PC-9 (cell line): ENCODE measurements at regions of chr6 and their contacts with region 1.

Region 1: DNA sequence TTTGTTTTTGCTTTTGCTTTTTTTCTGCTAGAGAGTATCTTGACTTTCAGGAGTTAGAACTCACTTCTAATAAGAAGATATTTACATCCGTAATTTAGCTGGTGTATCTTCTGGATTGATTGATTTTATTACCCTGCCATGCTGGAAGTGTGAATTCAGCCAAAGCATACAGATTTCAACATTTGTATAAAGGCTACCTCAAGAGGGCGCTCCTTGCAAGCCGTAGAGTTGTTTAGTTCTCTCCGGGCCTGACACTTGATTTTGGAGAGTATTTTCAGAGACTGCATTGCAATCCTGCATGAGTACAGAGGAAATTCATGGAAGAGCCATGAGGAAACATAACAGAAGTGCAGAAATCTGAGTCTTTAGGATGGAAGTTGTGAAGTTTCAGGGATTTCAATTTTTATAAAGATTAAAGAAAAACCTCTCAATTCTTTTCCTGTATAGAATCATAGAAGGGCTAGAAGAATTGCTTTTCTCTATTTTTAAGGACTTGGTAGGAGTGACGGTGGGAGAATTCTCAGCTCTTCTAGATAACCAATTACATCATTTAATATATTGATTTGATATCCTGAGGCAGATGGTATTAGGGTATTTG is 66.7 kb upstream of the TIAM2 start:
- DNase-seq: peak in 1 of 2 experiments; percentile 47
- H3K4me3 ChIP-seq: no peak overlapping the region
- H3K27ac ChIP-seq: no peak overlapping the region
- H3K4me1 ChIP-seq: peaks cover 23% of the 10 kb centered on the region
- H3K27me3 ChIP-seq: no peaks in the 10 kb centered on the region
- CTCF ChIP-seq: peak; percentile 90

Region 2: GRCh38 chr6:154890874-154891273 is 37.5 kb before region 1 on chr6:
- CTCF ChIA-PET with region 1: no interaction called
- POLR2A ChIA-PET with region 1: interaction called, 24 read pairs
- intact Hi-C with region 1: no loop called
- DNase-seq: no peak
- H3K4me3 ChIP-seq: no peak overlapping the region
- H3K27ac ChIP-seq: no peak overlapping the region
- H3K4me1 ChIP-seq: no peaks in the 10 kb centered on the region
- H3K27me3 ChIP-seq: no peaks in the 10 kb centered on the region
- CTCF ChIP-seq: no peak

Region 3: GRCh38 chr6:154981079-154981870 is 52.9 kb after region 1 on chr6:
- CTCF ChIA-PET with region 1: no interaction called
- POLR2A ChIA-PET with region 1: no interaction called
- intact Hi-C with region 1: no loop called
- DNase-seq: no peak
- H3K4me3 ChIP-seq: no peak overlapping the region
- H3K27ac ChIP-seq: no peak overlapping the region
- H3K4me1 ChIP-seq: no peaks in the 10 kb centered on the region
- H3K27me3 ChIP-seq: no peaks in the 10 kb centered on the region
- CTCF ChIP-seq: no peak

Region 4: DNA sequence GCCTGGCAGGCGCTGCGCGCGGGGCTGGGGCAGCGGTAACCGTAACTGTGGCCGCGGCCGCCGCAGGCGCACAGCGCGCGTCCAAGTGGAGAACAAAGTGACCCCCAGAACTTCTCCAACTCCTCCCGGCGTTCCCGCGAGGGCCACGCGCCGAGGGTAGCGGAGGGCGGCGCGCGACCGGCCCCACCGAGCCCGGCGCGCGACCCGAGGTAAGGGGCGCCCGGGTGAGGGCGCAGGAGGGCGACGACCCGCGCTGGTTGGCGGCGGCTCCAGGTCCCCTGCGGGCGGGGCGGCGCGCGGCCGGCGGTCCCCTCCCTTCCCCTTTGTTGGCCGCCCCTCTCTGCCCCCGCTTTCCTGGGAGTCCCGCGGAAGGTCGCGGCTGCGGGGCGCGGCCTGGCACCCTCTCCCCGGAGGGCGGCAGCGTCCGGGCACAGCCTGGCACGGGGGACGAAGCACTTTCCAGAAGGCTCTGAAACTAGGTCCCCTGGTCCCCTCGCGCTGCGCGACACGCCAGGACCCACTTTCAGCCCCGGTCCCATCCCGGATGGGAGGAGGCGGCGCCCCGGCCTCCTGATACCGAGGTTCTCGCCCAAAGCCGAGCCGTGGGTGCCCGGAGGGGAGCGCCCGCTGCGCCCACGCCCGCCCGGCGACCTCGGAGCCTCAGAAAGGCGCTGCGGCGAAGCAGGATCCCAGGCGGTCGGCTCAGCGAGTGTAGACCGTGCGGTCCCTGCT is 67.0 kb after region 1 on chr6 and contains the start of gene TIAM2:
- CTCF ChIA-PET with region 1: no interaction called
- POLR2A ChIA-PET with region 1: interaction called, 3 read pairs
- intact Hi-C with region 1: loop called (anchors 5 kb)
- DNase-seq: peak in 1 of 2 experiments; percentile 31
- H3K4me3 ChIP-seq: peak within 1 kb of the TSS; percentile 59
- H3K27ac ChIP-seq: no peak within 1 kb of the TSS
- H3K4me1 ChIP-seq: peaks cover 17% of the 10 kb centered on the region
- H3K27me3 ChIP-seq: peaks cover 19% of the 10 kb centered on the region
- CTCF ChIP-seq: no peak
- total RNA-seq, gene TIAM2: 11.4 and 14.8 TPM in 2 replicates

Region 5: DNA sequence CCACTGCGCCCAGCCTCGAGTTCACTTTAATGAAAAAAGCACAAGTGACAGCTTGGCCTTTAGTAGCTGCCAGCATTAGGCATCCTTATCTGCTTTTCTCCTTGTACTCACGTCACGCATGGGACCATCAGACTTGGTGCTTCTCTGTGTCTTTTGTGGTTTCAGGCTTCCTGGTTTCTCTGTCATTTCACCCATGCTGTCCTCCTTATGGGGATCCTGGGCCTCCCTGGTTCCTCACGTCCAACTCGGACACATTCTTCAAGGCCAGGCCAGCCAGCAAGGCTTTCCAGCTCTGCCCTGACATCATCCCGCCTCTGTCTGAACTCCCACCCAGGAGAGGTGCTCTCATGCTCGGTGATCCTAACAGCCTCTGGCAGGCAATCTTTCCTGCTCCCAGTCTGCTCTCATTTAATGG is 149.9 kb after region 1 on chr6:
- CTCF ChIA-PET with region 1: no interaction called
- POLR2A ChIA-PET with region 1: no interaction called
- intact Hi-C with region 1: no loop called
- DNase-seq: no peak
- H3K4me3 ChIP-seq: no peak overlapping the region
- H3K27ac ChIP-seq: no peak overlapping the region
- H3K4me1 ChIP-seq: no peaks in the 10 kb centered on the region
- H3K27me3 ChIP-seq: no peaks in the 10 kb centered on the region
- CTCF ChIP-seq: no peak

Region 6: GRCh38 chr6:155126727-155127439 is 198.5 kb after region 1 on chr6:
- CTCF ChIA-PET with region 1: no interaction called
- POLR2A ChIA-PET with region 1: no interaction called
- intact Hi-C with region 1: loop called (anchors 1 kb)
- DNase-seq: peak; percentile 78 to 91
- H3K4me3 ChIP-seq: peak overlapping the region; percentile 6; the same call in 1 of the 2 replicates
- H3K27ac ChIP-seq: peak overlapping the region; percentile 87
- H3K4me1 ChIP-seq: peaks cover 28% of the 10 kb centered on the region
- H3K27me3 ChIP-seq: no peaks in the 10 kb centered on the region
- CTCF ChIP-seq: no peak

Region 7: DNA sequence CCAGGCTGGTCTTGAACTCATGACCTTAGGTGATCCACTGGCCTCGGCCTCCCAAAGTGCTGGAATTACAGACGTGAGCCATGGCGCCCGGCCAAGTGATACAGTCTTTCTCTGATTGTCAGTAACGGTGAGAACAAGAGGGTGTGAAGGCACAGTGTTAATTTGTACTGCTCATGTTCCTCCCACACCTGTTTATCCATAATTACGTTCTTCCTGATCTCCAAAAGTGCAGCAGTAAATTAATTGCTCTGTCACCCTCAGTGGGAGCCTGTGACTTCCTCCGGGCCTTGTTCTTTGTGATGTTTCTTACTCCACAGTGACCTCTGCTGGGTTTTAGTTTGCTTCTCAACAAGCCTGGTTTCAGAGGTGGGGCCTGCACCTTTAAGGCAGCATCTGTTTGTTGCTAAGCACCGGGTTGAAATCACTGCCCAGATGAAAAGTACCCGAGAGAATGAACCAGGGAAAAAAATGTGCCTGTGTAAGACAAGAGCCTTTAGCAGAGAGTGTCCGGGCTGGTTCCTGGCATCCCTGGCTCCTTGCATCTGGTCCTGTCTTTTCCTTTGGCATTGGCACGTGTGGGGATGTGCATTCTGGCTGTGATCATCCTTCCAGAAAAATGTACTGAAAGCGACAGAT is 246.3 kb after region 1 on chr6:
- CTCF ChIA-PET with region 1: interaction called, 5 read pairs
- POLR2A ChIA-PET with region 1: no interaction called
- intact Hi-C with region 1: loop called (anchors 1 kb)
- DNase-seq: peak; percentile 60 to 81
- H3K4me3 ChIP-seq: no peak overlapping the region
- H3K27ac ChIP-seq: no peak overlapping the region
- H3K4me1 ChIP-seq: peaks cover 16% of the 10 kb centered on the region
- H3K27me3 ChIP-seq: no peaks in the 10 kb centered on the region
- CTCF ChIP-seq: peak; percentile 71

Region 8: DNA sequence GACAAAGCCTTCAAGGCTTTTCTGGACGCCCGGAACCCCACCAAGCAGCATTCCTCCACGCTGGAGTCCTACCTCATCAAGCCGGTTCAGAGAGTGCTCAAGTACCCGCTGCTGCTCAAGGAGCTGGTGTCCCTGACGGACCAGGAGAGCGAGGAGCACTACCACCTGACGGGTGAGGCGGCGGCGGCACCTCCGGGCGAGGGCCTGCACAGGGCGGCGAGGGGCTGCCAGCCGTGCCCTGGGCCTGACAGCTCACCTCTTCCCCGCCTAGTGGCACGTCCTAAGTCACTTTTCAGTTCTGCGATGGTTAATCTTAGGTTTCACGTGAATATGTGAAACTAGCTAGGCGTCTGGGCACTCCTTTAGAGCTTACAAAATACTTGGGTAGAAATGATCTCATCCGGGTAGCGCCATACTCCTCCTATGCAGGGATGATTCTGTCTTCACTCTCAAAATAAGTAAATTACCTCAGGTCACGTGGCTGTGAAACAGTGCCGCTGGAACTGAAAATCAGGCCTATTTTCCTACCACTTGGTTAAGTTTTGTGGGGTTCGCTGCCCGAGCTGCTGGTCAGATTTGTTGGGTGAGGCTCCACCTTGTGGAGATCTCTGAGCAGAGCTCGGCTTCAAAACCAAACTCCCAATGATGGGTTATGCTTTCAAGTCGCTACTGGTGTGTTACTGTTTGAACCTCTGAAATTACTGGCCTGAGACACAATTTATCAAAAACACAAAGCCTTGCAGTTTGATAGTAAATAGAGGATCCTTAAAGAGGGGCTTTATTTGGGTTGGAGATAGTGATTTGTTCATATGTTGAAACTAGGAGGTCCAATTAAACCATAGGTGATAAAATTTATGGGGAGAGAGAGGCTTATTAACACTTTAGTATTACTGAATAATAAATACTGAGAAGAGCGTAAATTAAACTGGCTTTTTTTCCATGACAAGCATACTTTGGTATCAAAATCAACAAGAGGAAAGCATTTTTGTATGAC is 319.9 kb after region 1 on chr6:
- CTCF ChIA-PET with region 1: no interaction called
- POLR2A ChIA-PET with region 1: no interaction called
- intact Hi-C with region 1: loop called (anchors 1 kb)
- DNase-seq: peak; percentile 61 to 81
- H3K4me3 ChIP-seq: peak overlapping the region; percentile 54
- H3K27ac ChIP-seq: peak overlapping the region; percentile 96
- H3K4me1 ChIP-seq: peaks cover 31% of the 10 kb centered on the region
- H3K27me3 ChIP-seq: no peaks in the 10 kb centered on the region
- CTCF ChIP-seq: peak; percentile 82

Region 9: DNA sequence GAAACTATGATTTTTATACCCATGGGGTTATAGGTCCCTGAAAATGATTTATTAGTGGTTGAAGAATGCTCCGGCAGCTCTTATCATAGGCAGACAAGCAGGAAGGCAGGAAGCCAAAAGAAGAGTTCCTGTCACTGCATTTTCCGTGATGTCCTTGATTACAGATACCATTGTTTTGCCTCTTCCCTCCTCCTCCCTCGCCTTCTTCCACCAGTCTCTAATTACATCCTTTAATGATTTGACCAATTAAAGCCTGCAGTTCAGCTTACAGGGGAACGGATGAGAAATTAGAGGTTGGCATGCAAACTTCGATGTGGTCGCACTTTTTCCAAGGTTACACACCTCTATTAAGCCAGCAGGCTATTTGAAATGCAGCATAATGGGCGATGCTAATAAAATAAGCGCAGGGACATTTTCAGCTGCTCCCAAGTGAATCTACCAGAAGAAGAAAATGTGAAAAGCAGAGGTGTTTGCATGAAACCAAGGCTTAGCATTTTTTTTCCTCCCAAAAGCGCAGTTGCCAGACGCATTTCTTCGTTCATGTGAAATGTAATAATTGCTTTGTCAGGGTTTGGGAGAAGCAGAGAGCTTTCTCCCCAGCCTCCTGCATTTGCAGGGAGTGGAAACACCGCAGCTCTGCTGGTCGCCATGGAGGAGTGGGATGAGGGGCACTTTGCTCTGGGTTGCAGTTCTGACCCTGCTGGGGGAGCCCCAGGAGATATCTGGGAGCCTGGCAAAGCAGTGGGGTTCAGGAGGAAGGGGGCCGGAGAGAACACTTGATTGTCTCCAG is 521.2 kb after region 1 on chr6:
- CTCF ChIA-PET with region 1: interaction called, 11 read pairs
- POLR2A ChIA-PET with region 1: no interaction called
- intact Hi-C with region 1: no loop called
- DNase-seq: no peak
- H3K4me3 ChIP-seq: no peak overlapping the region
- H3K27ac ChIP-seq: no peak overlapping the region
- H3K4me1 ChIP-seq: peaks cover under 1% of the 10 kb centered on the region
- H3K27me3 ChIP-seq: no peaks in the 10 kb centered on the region
- CTCF ChIP-seq: no peak